Lower lobe of right lung (tissue), 2 donors: ENCODE measurements at regions of chr12 and their contacts with region 1.

Region 1: GRCh38 chr12:107607464-107608392 is 77.9 kb upstream of the PWP1 start:
- DNase-seq: peak; percentile 85
- ATAC-seq: peak; percentile 82 to 86
- H3K4me3 ChIP-seq: no peak overlapping the region
- H3K27ac ChIP-seq: no peak overlapping the region
- H3K4me1 ChIP-seq: no peaks in the 10 kb centered on the region
- H3K27me3 ChIP-seq: peaks cover 5% of the 10 kb centered on the region
- CTCF ChIP-seq: peak; percentile 92

Region 2: GRCh38 chr12:107135177-107135576 is 472.6 kb before region 1 on chr12:
- intact Hi-C with region 1: loop called (anchors 5 kb)
- DNase-seq: no peak
- ATAC-seq: no peak
- H3K4me3 ChIP-seq: no peak overlapping the region
- H3K27ac ChIP-seq: no peak overlapping the region
- H3K4me1 ChIP-seq: no peaks in the 10 kb centered on the region
- H3K27me3 ChIP-seq: no peaks in the 10 kb centered on the region
- CTCF ChIP-seq: no peak